ENCODE measurements at regions of chr4 and their contacts with region 1.

Region 1: DNA sequence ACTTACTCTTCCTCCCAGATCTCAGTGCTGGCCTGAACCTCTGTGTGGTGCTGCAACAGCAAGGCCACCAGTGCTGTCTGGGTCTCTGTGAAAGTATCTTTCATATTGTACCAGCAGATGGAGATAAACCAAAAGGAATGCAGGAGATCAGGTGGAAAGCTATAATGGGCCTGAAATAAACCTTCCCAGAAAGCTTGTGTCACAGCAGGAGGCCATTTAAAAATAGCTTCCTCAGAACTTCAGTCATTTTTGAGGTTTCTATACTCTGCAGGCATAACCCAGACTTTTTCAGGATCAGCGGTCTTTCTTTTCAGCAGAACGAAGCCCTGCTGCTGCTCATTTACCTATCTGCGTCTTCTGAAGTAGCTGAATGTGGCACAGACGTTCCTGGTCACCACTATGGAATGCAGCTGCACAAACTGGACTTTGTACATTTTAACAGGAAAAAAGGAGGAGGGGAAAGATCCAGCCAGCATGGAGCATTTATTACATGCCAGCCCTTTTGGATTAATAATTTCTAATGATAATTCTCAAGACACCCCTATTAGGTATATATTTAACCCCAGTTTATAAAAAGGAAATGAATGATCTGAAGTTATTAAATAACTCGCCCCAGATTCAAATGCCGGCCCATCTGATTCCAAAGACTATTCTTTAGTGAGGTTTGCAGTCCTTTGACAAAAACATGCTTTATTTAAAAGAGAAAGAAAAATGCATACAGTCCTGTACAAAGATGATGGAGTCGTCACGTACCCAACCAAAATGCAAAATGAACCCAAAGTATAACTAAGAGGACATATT is 119.7 kb downstream of the NFKB1 start:
- DNase-seq: peak; percentile 78
- H3K4me3 ChIP-seq: no peak overlapping the region
- H3K27ac ChIP-seq: no peak overlapping the region
- H3K4me1 ChIP-seq: peaks cover 8% of the 10 kb centered on the region
- H3K27me3 ChIP-seq: no peaks in the 10 kb centered on the region
- CTCF ChIP-seq: peak; percentile 56

Region 2: GRCh38 chr4:102760645-102761295 is 139.9 kb after region 1 on chr4 and contains the start of gene MANBA:
- CTCF ChIA-PET with region 1: no interaction called
- POLR2A ChIA-PET with region 1: no interaction called
- intact Hi-C with region 1: loop called (anchors 10 kb)
- DNase-seq: peak; percentile 81
- H3K4me3 ChIP-seq: peak within 1 kb of the TSS; percentile 73
- H3K27ac ChIP-seq: no peak within 1 kb of the TSS
- H3K4me1 ChIP-seq: peaks cover 6% of the 10 kb centered on the region
- H3K27me3 ChIP-seq: no peaks in the 10 kb centered on the region
- CTCF ChIP-seq: no peak
- total RNA-seq, gene MANBA: 4.0 and 5.5 TPM in 2 replicates

Region 3: GRCh38 chr4:102826890-102827673 is 206.2 kb after region 1 on chr4 and contains the start of gene UBE2D3:
- CTCF ChIA-PET with region 1: interaction called, 3 read pairs
- POLR2A ChIA-PET with region 1: no interaction called
- intact Hi-C with region 1: loop called (anchors 5 kb)
- DNase-seq: peak; percentile 96
- H3K4me3 ChIP-seq: peak within 1 kb of the TSS; percentile 98
- H3K27ac ChIP-seq: peak within 1 kb of the TSS; percentile 100
- H3K4me1 ChIP-seq: peaks cover 23% of the 10 kb centered on the region
- H3K27me3 ChIP-seq: no peaks in the 10 kb centered on the region
- CTCF ChIP-seq: 0 out of 2 replicates have a peak, but pooled peaks have one; percentile 11
- total RNA-seq, gene UBE2D3: 354 and 378 TPM in 2 replicates

Region 4: DNA sequence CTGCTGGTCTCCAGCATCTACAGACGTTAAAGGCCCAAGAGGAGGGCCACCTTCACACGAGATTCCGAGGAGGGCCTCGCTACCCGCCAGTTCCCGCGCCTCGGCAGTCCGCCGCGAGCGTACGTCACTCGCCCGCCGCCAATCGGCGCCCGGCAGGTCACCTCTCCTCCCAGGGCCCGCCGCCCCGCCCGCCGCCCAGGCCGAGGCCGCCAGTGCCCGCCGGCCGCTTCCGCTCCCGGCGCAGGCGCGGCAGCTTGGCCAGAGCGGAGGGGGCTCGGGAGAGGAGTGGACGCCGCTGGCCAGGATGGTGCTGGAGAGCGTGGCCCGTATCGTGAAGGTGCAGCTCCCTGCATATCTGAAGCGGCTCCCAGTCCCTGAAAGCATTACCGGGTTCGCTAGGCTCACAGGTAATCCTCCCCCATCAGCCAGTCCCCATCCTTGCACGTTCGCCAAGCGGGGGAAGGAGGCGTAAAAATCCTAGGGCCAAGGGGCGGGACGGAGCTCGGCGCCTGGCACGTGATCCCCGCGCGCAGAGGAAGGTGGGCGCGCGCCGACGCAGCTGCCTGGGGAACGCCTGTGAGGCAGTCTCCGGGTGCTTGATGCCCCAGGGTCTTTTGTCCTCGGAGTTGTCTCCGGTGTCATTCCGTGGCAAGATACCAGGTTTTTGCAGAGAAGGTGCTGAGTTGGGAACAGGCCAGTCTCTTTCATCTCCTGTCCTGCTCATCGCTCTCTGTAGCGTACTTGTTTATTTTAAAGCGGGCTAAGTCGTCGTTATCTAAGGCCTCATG is 248.1 kb after region 1 on chr4 and contains the start of gene CISD2:
- CTCF ChIA-PET with region 1: no interaction called
- POLR2A ChIA-PET with region 1: no interaction called
- intact Hi-C with region 1: no loop called
- DNase-seq: peak; percentile 96
- H3K4me3 ChIP-seq: peak within 1 kb of the TSS; percentile 71
- H3K27ac ChIP-seq: peak within 1 kb of the TSS; percentile 96
- H3K4me1 ChIP-seq: peaks cover 20% of the 10 kb centered on the region
- H3K27me3 ChIP-seq: no peaks in the 10 kb centered on the region
- CTCF ChIP-seq: no peak
- total RNA-seq, gene CISD2: 40.2 and 49.3 TPM in 2 replicates

Region 5: GRCh38 chr4:102918859-102919258 is 298.0 kb after region 1 on chr4:
- CTCF ChIA-PET with region 1: no interaction called
- POLR2A ChIA-PET with region 1: no interaction called
- intact Hi-C with region 1: loop called (anchors 10 kb)
- DNase-seq: no peak
- H3K4me3 ChIP-seq: no peak overlapping the region
- H3K27ac ChIP-seq: no peak overlapping the region
- H3K4me1 ChIP-seq: no peaks in the 10 kb centered on the region
- H3K27me3 ChIP-seq: no peaks in the 10 kb centered on the region
- CTCF ChIP-seq: no peak

Region 6: GRCh38 chr4:103008875-103009729 is 388.2 kb after region 1 on chr4:
- CTCF ChIA-PET with region 1: interaction called, 24 read pairs
- POLR2A ChIA-PET with region 1: no interaction called
- intact Hi-C with region 1: loop called (anchors 1 kb)
- DNase-seq: peak; percentile 74
- H3K4me3 ChIP-seq: no peak overlapping the region
- H3K27ac ChIP-seq: no peak overlapping the region
- H3K4me1 ChIP-seq: no peaks in the 10 kb centered on the region
- H3K27me3 ChIP-seq: peaks cover 2% of the 10 kb centered on the region
- CTCF ChIP-seq: peak; percentile 70

Region 7: GRCh38 chr4:103091601-103092223 is 470.8 kb after region 1 on chr4:
- CTCF ChIA-PET with region 1: no interaction called
- POLR2A ChIA-PET with region 1: no interaction called
- intact Hi-C with region 1: loop called (anchors 5 kb)
- DNase-seq: peak; percentile 79
- H3K4me3 ChIP-seq: no peak overlapping the region
- H3K27ac ChIP-seq: no peak overlapping the region
- H3K4me1 ChIP-seq: no peaks in the 10 kb centered on the region
- H3K27me3 ChIP-seq: no peaks in the 10 kb centered on the region
- CTCF ChIP-seq: peak; percentile 73